ENCODE measurements at regions of chr6 and their contacts with region 1.

Region 1: DNA sequence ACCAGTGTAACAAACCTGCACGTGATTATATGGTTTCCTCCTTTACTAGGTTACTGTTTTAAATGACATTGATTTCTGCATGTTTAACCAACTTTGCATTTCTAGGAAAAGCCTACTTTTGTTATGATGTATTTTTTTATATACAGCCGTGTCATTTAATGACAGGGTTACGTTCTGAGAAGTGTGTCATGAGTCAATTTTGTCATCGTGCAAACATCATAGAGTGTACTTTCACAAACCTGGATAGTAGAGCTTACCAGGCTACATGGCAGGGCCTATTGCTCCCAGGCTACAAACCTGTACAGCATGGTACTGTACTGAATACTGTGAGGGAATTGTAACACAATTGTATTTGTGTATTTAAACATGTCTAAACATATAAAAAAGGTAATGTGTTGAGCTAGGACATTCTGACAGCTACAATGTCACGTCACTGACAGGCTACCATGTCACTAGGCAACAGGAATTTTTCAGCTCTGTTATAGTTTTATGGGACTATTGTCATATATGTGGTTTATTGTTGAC is 205.3 kb downstream of the PRL start:
- DNase-seq: no peak
- ATAC-seq: peak; percentile 93
- H3K4me3 Mint-ChIP-seq: no peak overlapping the region
- H3K27ac Mint-ChIP-seq: no peak overlapping the region
- H3K4me1 Mint-ChIP-seq: peaks cover 14% of the 10 kb centered on the region
- H3K27me3 Mint-ChIP-seq: no peaks in the 10 kb centered on the region

Region 2: DNA sequence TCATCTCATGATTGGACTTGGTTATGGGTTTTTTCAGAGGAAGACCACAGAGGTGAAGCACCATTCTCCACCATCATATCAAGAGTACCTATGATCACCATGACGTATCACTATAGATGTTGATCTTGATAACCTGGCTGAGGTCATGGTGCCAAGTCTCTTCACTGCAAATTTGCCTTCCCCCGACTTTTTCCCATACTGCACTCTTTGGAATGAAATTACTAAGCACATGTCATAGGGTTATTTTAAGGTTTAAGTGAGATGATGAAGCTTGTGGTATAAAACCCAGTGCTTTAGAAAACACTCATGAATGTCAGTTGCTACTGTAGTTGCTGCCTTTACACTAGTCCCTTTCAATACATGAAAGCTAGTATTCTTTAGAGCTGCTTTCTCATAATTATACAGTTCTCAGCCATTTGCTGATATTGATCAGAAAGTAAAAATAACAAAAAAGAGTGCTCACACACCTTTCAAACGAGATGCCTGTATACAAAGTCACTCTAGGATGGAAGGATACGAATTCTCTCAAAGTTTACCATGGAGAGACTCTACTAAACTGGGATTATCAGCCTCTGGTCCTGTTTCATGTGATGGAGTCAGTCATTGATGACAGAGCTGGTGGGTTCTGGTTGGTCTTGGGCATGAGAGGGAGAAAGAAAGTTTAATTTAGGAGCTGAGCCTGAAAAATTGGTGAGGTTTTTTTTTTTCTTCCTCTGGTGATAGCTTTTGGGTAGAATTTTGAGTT is 22.8 kb before region 1 on chr6:
- CTCF ChIA-PET with region 1: interaction called, 4 read pairs
- POLR2A ChIA-PET with region 1: no interaction called
- intact Hi-C with region 1: loop called in 1 of 2 experiments (anchors 2 kb)
- DNase-seq: peak; percentile 59
- ATAC-seq: peak; percentile 90
- H3K4me3 Mint-ChIP-seq: peak overlapping the region; percentile 11
- H3K27ac Mint-ChIP-seq: peak overlapping the region; percentile 81
- H3K4me1 Mint-ChIP-seq: peaks cover 32% of the 10 kb centered on the region
- H3K27me3 Mint-ChIP-seq: peaks cover 10% of the 10 kb centered on the region

Region 3: GRCh38 chr6:22079783-22080182 is 11.7 kb before region 1 on chr6:
- CTCF ChIA-PET with region 1: no interaction called
- POLR2A ChIA-PET with region 1: no interaction called
- intact Hi-C with region 1: no loop called
- DNase-seq: no peak
- ATAC-seq: no peak
- H3K4me3 Mint-ChIP-seq: no peak overlapping the region
- H3K27ac Mint-ChIP-seq: no peak overlapping the region
- H3K4me1 Mint-ChIP-seq: no peaks in the 10 kb centered on the region
- H3K27me3 Mint-ChIP-seq: no peaks in the 10 kb centered on the region

Region 4: DNA sequence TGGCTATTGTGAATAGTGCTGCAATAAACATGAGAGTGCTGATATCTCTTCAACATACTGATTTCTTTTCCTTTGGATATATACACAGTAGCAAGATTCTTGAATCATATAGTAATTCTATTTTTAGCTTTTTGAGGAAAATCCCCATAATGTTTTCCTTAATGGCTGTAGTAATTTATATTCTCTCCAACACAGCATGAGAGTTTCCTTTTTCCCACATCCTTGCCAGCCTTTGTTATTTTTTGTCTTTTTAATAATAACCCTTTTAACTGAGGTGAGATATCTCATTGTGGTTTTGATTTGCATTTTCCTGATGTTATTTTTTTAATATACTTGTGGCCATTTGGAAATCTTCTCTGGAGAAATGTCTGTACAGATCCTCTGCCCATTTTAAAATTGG is 72.8 kb after region 1 on chr6:
- CTCF ChIA-PET with region 1: no interaction called
- POLR2A ChIA-PET with region 1: no interaction called
- intact Hi-C with region 1: no loop called
- DNase-seq: no peak
- ATAC-seq: no peak
- H3K4me3 Mint-ChIP-seq: no peak overlapping the region
- H3K27ac Mint-ChIP-seq: no peak overlapping the region
- H3K4me1 Mint-ChIP-seq: no peaks in the 10 kb centered on the region
- H3K27me3 Mint-ChIP-seq: no peaks in the 10 kb centered on the region

Region 5: DNA sequence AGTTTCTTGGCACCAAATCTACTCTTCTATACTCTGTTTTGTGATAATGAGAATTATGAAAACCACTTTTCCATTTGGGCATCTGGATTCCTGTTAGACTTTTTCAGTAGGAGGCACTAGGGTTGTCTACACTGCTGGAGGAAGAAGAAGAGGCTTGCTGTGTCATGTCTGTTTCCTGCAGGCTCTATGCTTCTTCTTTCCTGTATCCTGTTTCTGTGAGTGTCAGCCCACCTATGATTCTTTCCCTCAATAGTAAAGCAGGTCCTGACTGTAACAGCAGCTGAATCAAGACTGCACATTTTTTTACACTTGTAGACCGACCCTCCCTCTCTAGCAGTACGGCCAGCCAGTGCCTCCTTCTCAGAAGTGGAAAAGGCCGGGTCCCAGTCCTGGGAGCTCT is 1081.7 kb after region 1 on chr6:
- CTCF ChIA-PET with region 1: no interaction called
- POLR2A ChIA-PET with region 1: no interaction called
- intact Hi-C with region 1: no loop called
- DNase-seq: no peak
- ATAC-seq: no peak
- H3K4me3 Mint-ChIP-seq: no peak overlapping the region
- H3K27ac Mint-ChIP-seq: no peak overlapping the region
- H3K4me1 Mint-ChIP-seq: peaks cover 25% of the 10 kb centered on the region
- H3K27me3 Mint-ChIP-seq: peaks cover 2% of the 10 kb centered on the region